ENCODE measurements at regions of chr11 and their contacts with region 1.

Region 1: DNA sequence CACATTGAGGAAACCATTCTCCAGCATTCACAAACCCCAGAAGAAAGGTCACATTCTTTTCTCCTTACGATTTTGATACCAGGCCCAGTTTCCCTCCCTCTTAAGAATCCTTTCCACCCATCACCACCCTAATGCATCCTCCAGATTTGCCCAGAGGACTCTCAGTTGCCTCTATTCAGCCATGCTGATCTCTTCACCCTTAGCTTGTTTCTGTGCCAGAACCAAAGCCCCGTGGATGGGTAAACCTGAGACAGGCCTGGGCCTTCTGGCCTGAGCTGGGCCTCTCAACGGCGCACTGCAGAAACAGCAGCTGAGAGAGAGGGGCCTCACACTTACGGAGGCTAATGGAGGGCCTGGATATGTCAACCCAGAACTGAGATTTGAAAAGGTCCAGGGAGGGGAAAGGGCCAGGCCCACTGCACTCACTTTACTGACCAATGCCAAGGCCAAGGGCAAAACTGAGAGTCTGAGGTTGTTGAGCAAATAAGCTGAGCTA is 32.2 kb upstream of the OAF start:
- DNase-seq: no peak
- H3K4me3 ChIP-seq: no peak overlapping the region
- H3K27ac ChIP-seq: no peak overlapping the region
- H3K4me1 ChIP-seq: no peaks in the 10 kb centered on the region
- H3K27me3 ChIP-seq: no peaks in the 10 kb centered on the region
- CTCF ChIP-seq: no peak
- POLR2A ChIP-seq: no peak

Region 2: GRCh38 chr11:120215634-120216033 is 37.0 kb after region 1 on chr11:
- intact Hi-C with region 1: loop called (anchors 5 kb)
- DNase-seq: no peak
- H3K4me3 ChIP-seq: no peak overlapping the region
- H3K27ac ChIP-seq: no peak overlapping the region
- H3K4me1 ChIP-seq: peaks cover 22% of the 10 kb centered on the region
- H3K27me3 ChIP-seq: no peaks in the 10 kb centered on the region
- CTCF ChIP-seq: no peak
- POLR2A ChIP-seq: no peak

Measured in testis (tissue), 5 donors.